ENCODE measurements at regions of chr15 and their contacts with region 1.

Region 1: DNA sequence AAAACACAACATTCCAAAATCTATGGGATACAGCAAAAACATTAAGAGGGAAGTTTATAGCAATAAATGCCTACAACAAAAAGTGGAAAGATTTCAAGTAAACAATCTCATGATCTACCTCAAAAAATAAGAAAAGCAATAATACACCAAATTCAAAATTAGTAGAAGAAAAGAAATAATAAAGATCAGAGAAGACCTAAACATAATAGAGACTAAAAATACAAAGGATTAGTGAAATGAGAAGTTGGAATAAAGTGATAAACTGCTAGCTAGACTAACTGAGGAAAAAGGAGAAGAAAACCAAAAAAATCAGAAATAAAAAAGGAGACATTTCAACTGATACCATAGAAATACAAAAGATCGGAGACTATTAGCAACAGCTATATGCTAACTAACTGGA is 1027.6 kb downstream of the AGBL1 start:
- DNase-seq: no peak
- ATAC-seq: no peak
- H3K4me3 ChIP-seq: no peak overlapping the region
- H3K27ac ChIP-seq: no peak overlapping the region
- H3K4me1 ChIP-seq: no peaks in the 10 kb centered on the region
- H3K27me3 ChIP-seq: no peaks in the 10 kb centered on the region
- CTCF ChIP-seq: no peak

Region 2: DNA sequence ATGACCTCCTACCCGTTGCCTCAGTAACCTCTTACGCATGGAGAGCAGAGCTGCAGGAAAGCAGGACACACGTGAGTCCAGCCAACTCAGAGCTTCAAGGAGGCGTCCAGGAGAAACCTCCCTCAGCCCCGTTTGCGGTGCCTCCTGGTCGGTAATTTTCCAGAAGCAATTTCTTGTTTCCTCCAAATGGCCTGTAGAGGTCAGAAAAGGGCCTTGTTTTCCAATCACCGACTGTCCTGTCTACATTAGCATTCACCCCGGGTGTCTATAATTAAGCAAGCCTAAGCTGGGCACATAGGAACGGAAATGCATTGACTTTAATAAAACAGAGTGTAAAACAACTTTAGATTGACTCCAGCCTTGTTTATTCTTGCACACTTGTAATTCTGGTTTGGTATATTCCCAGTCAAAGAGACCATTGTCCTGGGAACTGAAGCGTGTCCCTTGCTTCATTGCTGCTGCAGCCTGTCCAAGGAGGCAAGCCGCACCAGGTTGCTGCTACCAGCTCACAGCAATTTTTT is 191.4 kb before region 1 on chr15:
- CTCF ChIA-PET with region 1: no interaction called
- POLR2A ChIA-PET with region 1: interaction called, 51 read pairs
- intact Hi-C with region 1: no loop called
- DNase-seq: peak; percentile 48
- ATAC-seq: no peak
- H3K4me3 ChIP-seq: no peak overlapping the region
- H3K27ac ChIP-seq: no peak overlapping the region
- H3K4me1 ChIP-seq: no peaks in the 10 kb centered on the region
- H3K27me3 ChIP-seq: no peaks in the 10 kb centered on the region
- CTCF ChIP-seq: peak; percentile 57; the same call in 1 of the 2 replicates

Region 3: DNA sequence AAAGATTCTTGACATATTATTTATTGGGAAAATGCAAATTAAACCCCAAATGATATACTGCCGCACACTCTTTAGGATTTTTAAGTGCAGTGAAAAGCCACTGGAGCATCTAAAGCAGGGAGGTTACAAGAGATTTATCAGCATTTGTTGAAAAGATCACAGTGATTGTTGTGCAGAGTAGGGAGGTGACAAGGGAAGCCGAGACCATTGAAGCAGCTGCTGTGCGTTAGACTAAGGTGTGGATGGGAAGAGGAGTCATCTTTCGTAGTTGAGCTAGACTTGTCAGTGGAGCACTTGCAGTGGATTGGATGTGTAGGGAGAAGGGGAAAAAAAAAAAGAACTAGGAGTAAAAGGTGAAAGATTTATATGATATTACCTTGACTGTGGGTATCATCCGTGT is 294.7 kb after region 1 on chr15:
- CTCF ChIA-PET with region 1: no interaction called
- POLR2A ChIA-PET with region 1: no interaction called
- intact Hi-C with region 1: no loop called
- DNase-seq: no peak
- ATAC-seq: no peak
- H3K4me3 ChIP-seq: no peak overlapping the region
- H3K27ac ChIP-seq: no peak overlapping the region
- H3K4me1 ChIP-seq: no peaks in the 10 kb centered on the region
- H3K27me3 ChIP-seq: no peaks in the 10 kb centered on the region
- CTCF ChIP-seq: no peak